Transverse colon (tissue), 4 donors: ENCODE measurements at regions of chr3 and their contacts with region 1.

Region 1: DNA sequence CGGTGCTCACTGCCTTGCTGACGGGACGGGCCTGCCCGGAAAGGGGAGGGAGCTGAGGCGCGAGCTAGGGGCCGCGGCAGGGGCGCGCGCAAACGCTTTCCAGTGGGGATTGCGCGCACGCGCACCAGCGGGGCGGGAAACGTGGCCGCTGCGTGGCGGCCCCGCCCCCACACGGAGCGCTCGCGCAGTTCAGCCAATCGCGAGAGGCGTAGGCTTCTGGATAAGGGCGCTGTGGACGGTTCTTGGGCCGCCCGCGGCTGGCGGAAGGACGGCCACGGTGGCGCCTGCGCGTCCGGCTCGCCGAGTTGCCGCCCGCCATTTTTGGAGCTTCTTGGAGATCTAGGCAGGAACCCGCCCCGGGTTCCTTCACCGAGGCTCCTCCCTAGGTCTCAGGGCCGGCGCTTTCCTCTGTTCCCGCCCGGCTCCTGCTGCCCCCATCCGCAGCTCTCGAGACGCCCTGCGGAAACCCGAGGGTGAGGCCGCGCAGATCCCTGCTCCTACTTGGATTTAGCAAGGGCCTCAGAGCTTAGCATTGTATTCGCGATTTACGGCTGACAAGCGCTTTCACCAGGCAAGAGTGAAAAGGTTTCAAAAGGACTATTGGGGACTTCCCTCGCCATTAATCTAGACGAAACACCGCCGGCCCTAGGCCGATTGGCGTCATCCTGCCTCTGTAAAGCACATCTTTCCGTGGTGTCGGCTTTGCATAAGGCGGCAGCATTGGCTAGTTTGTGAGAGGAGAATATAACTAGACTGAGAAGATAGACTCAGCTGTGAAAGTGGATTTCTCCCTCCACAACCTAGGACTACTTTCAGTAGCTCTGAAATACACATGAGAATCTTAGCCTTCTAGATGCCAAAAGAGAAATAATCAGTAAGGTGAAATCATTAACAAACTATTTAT is 496 bp upstream of the STAG1 start:
- DNase-seq: peak; percentile 99
- H3K4me3 ChIP-seq: peak overlapping the region; percentile 1 to 93 (median 90)
- H3K27ac ChIP-seq: peak overlapping the region; percentile 88 to 99 (median 96)
- H3K4me1 ChIP-seq: peaks cover 8 to 33% (median 28%) of the 10 kb centered on the region in 4 donors
- H3K27me3 ChIP-seq: no peaks in the 10 kb centered on the region
- CTCF ChIP-seq: peak in 1 of 5 experiments; percentile 21
- EP300 ChIP-seq: no peak
- POLR2A ChIP-seq: peak; percentile 90

Region 2: DNA sequence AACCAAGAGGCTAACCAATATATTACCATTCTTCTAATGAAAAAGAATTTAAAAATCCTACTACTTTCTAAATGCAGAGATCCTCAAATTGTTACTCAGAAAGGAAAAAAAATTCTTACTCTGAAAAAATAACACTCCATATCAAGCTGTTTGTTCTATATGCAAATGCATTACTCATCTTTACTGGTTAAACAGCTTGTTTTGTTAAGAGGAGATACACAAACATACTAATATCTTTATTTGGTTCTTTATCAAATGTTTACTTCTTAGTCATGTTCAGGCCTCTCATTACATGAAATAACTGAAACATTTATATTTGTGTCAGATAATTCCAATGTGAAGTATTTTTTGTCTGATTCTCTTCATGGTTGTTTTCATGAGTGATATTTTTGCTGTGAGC is 355.8 kb before region 1 on chr3:
- in situ Hi-C with region 1: loop called (anchors 10 to 25 kb)
- intact Hi-C with region 1: no loop called
- DNase-seq: no peak
- H3K4me3 ChIP-seq: no peak overlapping the region
- H3K27ac ChIP-seq: no peak overlapping the region
- H3K4me1 ChIP-seq: peaks cover 0 to 3% (median under 1%) of the 10 kb centered on the region in 4 donors
- H3K27me3 ChIP-seq: no peaks in the 10 kb centered on the region
- CTCF ChIP-seq: no peak
- EP300 ChIP-seq: no peak
- POLR2A ChIP-seq: no peak

Region 3: DNA sequence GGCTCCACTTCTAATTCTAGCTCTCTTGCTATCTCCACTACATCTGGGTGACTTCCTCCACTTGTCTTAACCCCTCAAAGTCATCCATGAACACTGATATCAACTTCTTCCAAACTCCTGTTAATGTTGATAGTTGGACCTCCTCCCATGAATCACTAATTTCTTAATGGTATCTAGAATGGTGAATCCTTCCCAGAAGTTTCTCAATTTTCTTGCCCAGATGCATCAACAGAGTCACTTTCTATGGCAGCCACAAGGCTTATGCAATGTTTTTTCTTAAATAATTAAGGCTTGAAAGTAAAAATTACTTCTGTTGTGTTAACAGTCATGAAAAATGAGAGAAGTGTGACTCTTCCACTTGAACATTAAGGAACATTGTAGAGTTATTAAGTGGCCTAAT is 338.2 kb before region 1 on chr3:
- in situ Hi-C with region 1: no loop called
- intact Hi-C with region 1: loop called (anchors 10 kb)
- DNase-seq: no peak
- H3K4me3 ChIP-seq: no peak overlapping the region
- H3K27ac ChIP-seq: no peak overlapping the region
- H3K4me1 ChIP-seq: no peaks in the 10 kb centered on the region
- H3K27me3 ChIP-seq: no peaks in the 10 kb centered on the region
- CTCF ChIP-seq: no peak
- EP300 ChIP-seq: no peak
- POLR2A ChIP-seq: no peak

Region 4: DNA sequence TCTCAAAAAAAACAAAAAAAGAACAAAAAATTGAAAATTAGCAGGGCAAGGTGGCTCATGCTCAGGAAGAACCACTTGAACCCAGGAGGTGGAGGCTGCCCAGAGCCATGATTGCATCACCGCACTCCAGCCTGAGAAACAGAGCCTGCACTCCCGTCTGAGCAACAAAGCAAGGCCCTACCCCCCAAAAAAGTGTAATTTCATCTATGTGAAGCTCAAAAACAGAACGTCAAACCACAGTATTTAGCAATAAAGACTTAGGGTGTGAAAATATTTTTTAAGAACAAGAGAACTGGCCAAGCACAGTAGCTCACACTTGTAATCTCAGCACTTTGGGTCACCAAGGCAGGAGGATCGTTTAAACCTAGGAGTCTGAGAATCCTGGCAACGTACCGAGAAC is 38.7 kb before region 1 on chr3:
- in situ Hi-C with region 1: no loop called
- intact Hi-C with region 1: no loop called
- DNase-seq: no peak
- H3K4me3 ChIP-seq: no peak overlapping the region
- H3K27ac ChIP-seq: no peak overlapping the region
- H3K4me1 ChIP-seq: no peaks in the 10 kb centered on the region
- H3K27me3 ChIP-seq: no peaks in the 10 kb centered on the region
- CTCF ChIP-seq: no peak
- EP300 ChIP-seq: no peak
- POLR2A ChIP-seq: no peak